B cell (primary cell): ENCODE measurements at regions of chr1 and their contacts with region 1.

Region 1: GRCh38 chr1:172532700-172533509 is at the start of gene SUCO:
- DNase-seq: peak; percentile 100
- ATAC-seq: peak; percentile 80
- H3K4me3 ChIP-seq: peak within 1 kb of the TSS; percentile 64 to 98 (median 96)
- H3K4me3 Mint-ChIP-seq: peak within 1 kb of the TSS; percentile 100
- H3K27ac ChIP-seq: peak within 1 kb of the TSS; percentile 99
- H3K27ac Mint-ChIP-seq: peak within 1 kb of the TSS; percentile 100
- H3K4me1 ChIP-seq: peaks cover 22 to 37% of the 10 kb centered on the region in 2 donors
- H3K4me1 Mint-ChIP-seq: peaks cover 45% of the 10 kb centered on the region
- H3K27me3 ChIP-seq: no peaks in the 10 kb centered on the region
- H3K27me3 Mint-ChIP-seq: peaks cover 9% of the 10 kb centered on the region
- CTCF ChIP-seq: peak; percentile 13
- total RNA-seq, gene SUCO: 59.7 and 59.9 TPM in 2 replicates

Region 2: GRCh38 chr1:171741872-171742576 is 790.9 kb before region 1 on chr1 and contains the start of gene VAMP4:
- CTCF ChIA-PET with region 1: no interaction called
- POLR2A ChIA-PET with region 1: no interaction called
- intact Hi-C with region 1: loop called (anchors 1 kb)
- DNase-seq: peak; percentile 92
- ATAC-seq: peak; percentile 90
- H3K4me3 ChIP-seq: peak within 1 kb of the TSS; percentile 69 to 95 (median 93)
- H3K4me3 Mint-ChIP-seq: peak within 1 kb of the TSS; percentile 100
- H3K27ac ChIP-seq: peak within 1 kb of the TSS; percentile 91
- H3K27ac Mint-ChIP-seq: peak within 1 kb of the TSS; percentile 100
- H3K4me1 ChIP-seq: peaks cover 20 to 23% of the 10 kb centered on the region in 2 donors
- H3K4me1 Mint-ChIP-seq: peaks cover 40% of the 10 kb centered on the region
- H3K27me3 ChIP-seq: no peaks in the 10 kb centered on the region
- H3K27me3 Mint-ChIP-seq: no peaks in the 10 kb centered on the region
- CTCF ChIP-seq: no peak
- total RNA-seq, gene VAMP4: 17.5 and 21.8 TPM in 2 replicates

Region 3: GRCh38 chr1:171841050-171841940 is 691.6 kb before region 1 on chr1 and contains the start of gene DNM3:
- CTCF ChIA-PET with region 1: no interaction called
- POLR2A ChIA-PET with region 1: interaction called, 4 read pairs
- intact Hi-C with region 1: loop called (anchors 1 kb)
- DNase-seq: peak; percentile 88
- ATAC-seq: peak; percentile 93
- H3K4me3 ChIP-seq: peak within 1 kb of the TSS; percentile 50 to 86 (median 73)
- H3K4me3 Mint-ChIP-seq: peak within 1 kb of the TSS; percentile 86
- H3K27ac ChIP-seq: no peak within 1 kb of the TSS
- H3K27ac Mint-ChIP-seq: peak within 1 kb of the TSS; percentile 72
- H3K4me1 ChIP-seq: peaks cover 11 to 21% of the 10 kb centered on the region in 2 donors
- H3K4me1 Mint-ChIP-seq: peaks cover 17% of the 10 kb centered on the region
- H3K27me3 ChIP-seq: peaks cover 0 to 25% (median 17%) of the 10 kb centered on the region in 4 experiments
- H3K27me3 Mint-ChIP-seq: peaks cover 23% of the 10 kb centered on the region
- CTCF ChIP-seq: no peak
- total RNA-seq, gene DNM3: 1.3 and 1.5 TPM in 2 replicates

Region 4: GRCh38 chr1:172443626-172444453 is 89.1 kb before region 1 on chr1 and contains the start of gene PIGC:
- CTCF ChIA-PET with region 1: interaction called, 3 read pairs
- POLR2A ChIA-PET with region 1: no interaction called
- intact Hi-C with region 1: loop called (anchors 2 kb)
- DNase-seq: peak; percentile 92
- ATAC-seq: peak; percentile 100
- H3K4me3 ChIP-seq: peak within 1 kb of the TSS; percentile 68 to 95 (median 93)
- H3K4me3 Mint-ChIP-seq: peak within 1 kb of the TSS; percentile 96
- H3K27ac ChIP-seq: peak within 1 kb of the TSS; percentile 77 to 86
- H3K27ac Mint-ChIP-seq: peak within 1 kb of the TSS; percentile 90
- H3K4me1 ChIP-seq: peaks cover 11 to 16% of the 10 kb centered on the region in 2 donors
- H3K4me1 Mint-ChIP-seq: peaks cover 37% of the 10 kb centered on the region
- H3K27me3 ChIP-seq: no peaks in the 10 kb centered on the region
- H3K27me3 Mint-ChIP-seq: no peaks in the 10 kb centered on the region
- CTCF ChIP-seq: peak; percentile 91
- total RNA-seq, gene PIGC: 28.8 TPM in 2 replicates

Region 5: DNA sequence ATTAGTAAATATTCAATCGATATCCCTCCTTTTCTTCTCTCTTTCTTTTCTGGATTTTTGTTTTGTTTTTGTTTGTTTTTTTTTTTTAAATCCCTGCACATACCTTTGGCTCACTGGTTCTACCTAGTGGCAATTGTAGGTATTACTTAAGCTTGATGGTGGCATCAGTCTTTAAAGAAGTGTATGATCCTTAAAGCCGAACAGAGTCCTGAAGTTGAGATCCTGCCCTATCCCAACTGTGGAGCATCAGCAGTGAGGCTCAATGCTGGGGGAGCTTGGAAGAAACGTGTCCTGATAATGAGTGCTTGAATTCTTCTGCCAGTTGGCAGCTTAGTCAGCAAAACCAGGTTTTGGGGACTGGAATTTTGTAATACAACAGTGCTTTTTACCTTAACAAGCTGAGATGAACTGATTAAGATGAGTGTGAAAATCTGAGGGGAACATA is 186.8 kb after region 1 on chr1:
- CTCF ChIA-PET with region 1: interaction called, 3 read pairs
- POLR2A ChIA-PET with region 1: no interaction called
- intact Hi-C with region 1: loop called (anchors 10 kb)
- DNase-seq: peak; percentile 55
- ATAC-seq: peak; percentile 56
- H3K4me3 ChIP-seq: no peak overlapping the region
- H3K4me3 Mint-ChIP-seq: no peak overlapping the region
- H3K27ac ChIP-seq: no peak overlapping the region
- H3K27ac Mint-ChIP-seq: no peak overlapping the region
- H3K4me1 ChIP-seq: peaks cover 3 to 5% of the 10 kb centered on the region in 2 donors
- H3K4me1 Mint-ChIP-seq: peaks cover 7% of the 10 kb centered on the region
- H3K27me3 ChIP-seq: no peaks in the 10 kb centered on the region
- H3K27me3 Mint-ChIP-seq: peaks cover 3% of the 10 kb centered on the region
- CTCF ChIP-seq: peak; percentile 90

Region 6: GRCh38 chr1:173476664-173477285 is 943.9 kb after region 1 on chr1:
- CTCF ChIA-PET with region 1: no interaction called
- POLR2A ChIA-PET with region 1: no interaction called
- intact Hi-C with region 1: loop called (anchors 2 kb)
- DNase-seq: peak; percentile 92
- ATAC-seq: peak; percentile 92
- H3K4me3 ChIP-seq: peak overlapping the region; percentile 48 to 96 (median 87)
- H3K4me3 Mint-ChIP-seq: peak overlapping the region; percentile 99
- H3K27ac ChIP-seq: peak overlapping the region; percentile 42 to 82
- H3K27ac Mint-ChIP-seq: peak overlapping the region; percentile 99
- H3K4me1 ChIP-seq: peaks cover 22 to 23% of the 10 kb centered on the region in 2 donors
- H3K4me1 Mint-ChIP-seq: peaks cover 42% of the 10 kb centered on the region
- H3K27me3 ChIP-seq: no peaks in the 10 kb centered on the region
- H3K27me3 Mint-ChIP-seq: no peaks in the 10 kb centered on the region
- CTCF ChIP-seq: no peak

Region 7: GRCh38 chr1:174022080-174022975 is 1489.4 kb after region 1 on chr1 and contains the start of gene RC3H1:
- CTCF ChIA-PET with region 1: no interaction called
- POLR2A ChIA-PET with region 1: no interaction called
- intact Hi-C with region 1: loop called (anchors 2 kb)
- DNase-seq: peak; percentile 93
- ATAC-seq: peak; percentile 95
- H3K4me3 ChIP-seq: peak within 1 kb of the TSS; percentile 73 to 94 (median 91)
- H3K4me3 Mint-ChIP-seq: peak within 1 kb of the TSS; percentile 95
- H3K27ac ChIP-seq: peak within 1 kb of the TSS; percentile 76 to 93
- H3K27ac Mint-ChIP-seq: peak within 1 kb of the TSS; percentile 96
- H3K4me1 ChIP-seq: peaks cover 30 to 36% of the 10 kb centered on the region in 2 donors
- H3K4me1 Mint-ChIP-seq: peaks cover 41% of the 10 kb centered on the region
- H3K27me3 ChIP-seq: no peaks in the 10 kb centered on the region
- H3K27me3 Mint-ChIP-seq: no peaks in the 10 kb centered on the region
- CTCF ChIP-seq: no peak
- total RNA-seq, gene RC3H1: 84.4 and 84.5 TPM in 2 replicates